Tibial artery (tissue), 4 donors: ENCODE measurements at regions of chr11 and their contacts with region 1.

Region 1: DNA sequence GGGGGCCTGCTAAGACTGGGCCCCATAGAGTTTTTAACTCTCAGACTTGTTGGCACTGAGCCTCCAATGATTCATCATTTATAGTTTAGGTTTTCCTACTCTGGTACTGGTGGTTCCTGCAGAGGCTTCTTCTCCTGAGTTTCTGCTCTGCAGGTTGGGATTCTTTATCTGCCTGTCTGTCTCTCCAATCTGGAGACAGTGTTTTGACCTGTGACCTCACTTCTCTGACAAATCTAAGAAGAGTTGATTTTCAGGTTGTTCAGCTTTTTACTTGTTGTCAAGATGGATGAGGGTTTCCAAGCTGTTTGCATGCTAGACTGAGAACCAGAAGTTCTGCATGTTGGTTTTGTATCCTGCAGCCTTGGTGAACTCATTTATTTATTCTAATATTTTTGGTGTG is 63.9 kb downstream of the JAM3 start:
- DNase-seq: no peak
- H3K4me3 ChIP-seq: no peak overlapping the region
- H3K27ac ChIP-seq: peak overlapping the region; percentile 13 to 36
- H3K4me1 ChIP-seq: peaks cover 0 to 21% (median 4%) of the 10 kb centered on the region in 4 donors
- H3K27me3 ChIP-seq: no peaks in the 10 kb centered on the region
- CTCF ChIP-seq: no peak

Region 2: GRCh38 chr11:133951327-133952198 is 181.2 kb before region 1 on chr11:
- intact Hi-C with region 1: loop called (anchors 5 kb)
- DNase-seq: peak; percentile 59 to 90
- H3K4me3 ChIP-seq: peak overlapping the region; percentile 48 to 52
- H3K27ac ChIP-seq: peak overlapping the region; percentile 95 to 96
- H3K4me1 ChIP-seq: peaks cover 0 to 87% (median 81%) of the 10 kb centered on the region in 4 donors
- H3K27me3 ChIP-seq: no peaks in the 10 kb centered on the region
- CTCF ChIP-seq: no peak